MCF 10A (cell line): ENCODE measurements at regions of chr10 and their contacts with region 1.

Region 1: GRCh38 chr10:93006435-93007039 is 54.1 kb upstream of the CYP26C1 start:
- DNase-seq: peak; percentile 67
- H3K4me3 Mint-ChIP-seq: no peak overlapping the region
- H3K27ac Mint-ChIP-seq: no peak overlapping the region
- H3K4me1 Mint-ChIP-seq: peaks cover 7% of the 10 kb centered on the region
- H3K27me3 Mint-ChIP-seq: no peaks in the 10 kb centered on the region
- CTCF ChIP-seq: peak; percentile 68

Region 2: DNA sequence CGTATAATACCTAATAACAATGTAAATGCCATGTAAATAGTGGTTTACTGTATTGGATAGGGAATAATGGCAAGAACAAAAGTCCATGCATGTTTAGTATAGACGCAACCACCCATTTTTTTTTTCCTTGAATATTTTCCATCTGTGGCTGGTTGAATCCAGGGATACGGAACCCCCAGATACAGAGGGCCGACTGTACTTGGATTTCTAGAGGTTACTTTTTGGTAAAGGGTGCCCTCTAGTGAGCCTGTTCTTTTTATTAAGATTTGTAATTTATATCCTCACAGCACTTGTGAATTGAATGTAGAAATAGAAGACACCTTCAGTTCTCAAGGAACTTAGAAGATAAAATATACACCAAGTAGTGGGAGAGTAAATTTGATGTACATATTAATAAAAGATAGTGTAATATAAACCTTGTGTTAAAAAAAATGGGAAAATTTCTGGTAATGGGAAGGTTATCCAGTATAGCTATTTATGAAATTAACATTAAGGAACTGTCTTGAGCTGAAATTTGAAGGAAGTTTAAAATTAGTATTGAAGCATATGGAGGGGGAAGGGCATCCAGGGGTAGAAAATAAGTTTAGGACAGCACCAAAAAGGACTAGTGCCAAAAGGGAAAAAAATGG is 126.2 kb before region 1 on chr10:
- CTCF ChIA-PET with region 1: interaction called, 10 read pairs
- POLR2A ChIA-PET with region 1: no interaction called
- intact Hi-C with region 1: loop called (anchors 1 kb)
- DNase-seq: peak; percentile 59
- H3K4me3 Mint-ChIP-seq: no peak overlapping the region
- H3K27ac Mint-ChIP-seq: no peak overlapping the region
- H3K4me1 Mint-ChIP-seq: no peaks in the 10 kb centered on the region
- H3K27me3 Mint-ChIP-seq: no peaks in the 10 kb centered on the region
- CTCF ChIP-seq: peak; percentile 39

Region 3: GRCh38 chr10:92990615-92991014 is 15.9 kb before region 1 on chr10:
- CTCF ChIA-PET with region 1: interaction called, 10 read pairs
- POLR2A ChIA-PET with region 1: no interaction called
- intact Hi-C with region 1: no loop called
- DNase-seq: peak; percentile 4
- H3K4me3 Mint-ChIP-seq: no peak overlapping the region
- H3K27ac Mint-ChIP-seq: no peak overlapping the region
- H3K4me1 Mint-ChIP-seq: no peaks in the 10 kb centered on the region
- H3K27me3 Mint-ChIP-seq: no peaks in the 10 kb centered on the region
- CTCF ChIP-seq: no peak

Region 4: DNA sequence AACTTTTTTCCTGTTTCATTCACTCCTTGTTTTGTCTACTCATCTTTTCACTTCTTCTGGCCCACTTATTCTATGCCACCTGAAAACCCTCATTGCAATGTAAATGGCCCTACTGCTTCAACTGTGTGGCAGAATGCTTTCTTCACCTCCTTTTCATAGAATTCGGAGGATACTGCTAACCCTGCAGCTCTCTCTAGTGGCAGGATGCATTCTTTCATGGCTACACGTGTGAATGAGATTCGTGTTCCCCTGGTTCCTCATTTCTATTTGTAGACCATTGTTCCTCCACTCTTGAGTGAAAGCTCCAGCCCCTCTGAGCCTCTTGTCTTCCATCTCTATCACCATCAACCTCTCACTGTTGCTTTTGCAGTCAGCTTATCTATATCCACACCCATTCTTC is 33.2 kb after region 1 on chr10:
- CTCF ChIA-PET with region 1: interaction called, 56 read pairs
- POLR2A ChIA-PET with region 1: interaction called, 3 read pairs
- intact Hi-C with region 1: loop called (anchors 1 kb)
- DNase-seq: peak; percentile 54
- H3K4me3 Mint-ChIP-seq: no peak overlapping the region
- H3K27ac Mint-ChIP-seq: no peak overlapping the region
- H3K4me1 Mint-ChIP-seq: no peaks in the 10 kb centered on the region
- H3K27me3 Mint-ChIP-seq: no peaks in the 10 kb centered on the region
- CTCF ChIP-seq: peak; percentile 65

Region 5: GRCh38 chr10:93080350-93081046 is 74.0 kb after region 1 on chr10:
- CTCF ChIA-PET with region 1: interaction called, 37 read pairs
- POLR2A ChIA-PET with region 1: no interaction called
- intact Hi-C with region 1: no loop called
- DNase-seq: peak; percentile 57
- H3K4me3 Mint-ChIP-seq: peak overlapping the region; percentile 29
- H3K27ac Mint-ChIP-seq: peak overlapping the region; percentile 72
- H3K4me1 Mint-ChIP-seq: peaks cover 5% of the 10 kb centered on the region
- H3K27me3 Mint-ChIP-seq: peaks cover 17% of the 10 kb centered on the region
- CTCF ChIP-seq: peak; percentile 86

Region 6: GRCh38 chr10:93288654-93289634 is 282.4 kb after region 1 on chr10:
- CTCF ChIA-PET with region 1: interaction called, 3 read pairs
- POLR2A ChIA-PET with region 1: no interaction called
- intact Hi-C with region 1: loop called (anchors 1 kb)
- DNase-seq: peak; percentile 86
- H3K4me3 Mint-ChIP-seq: no peak overlapping the region
- H3K27ac Mint-ChIP-seq: peak overlapping the region; percentile 40
- H3K4me1 Mint-ChIP-seq: peaks cover 5% of the 10 kb centered on the region
- H3K27me3 Mint-ChIP-seq: no peaks in the 10 kb centered on the region
- CTCF ChIP-seq: peak; percentile 77

Region 7: GRCh38 chr10:93515071-93516005 is 508.8 kb after region 1 on chr10:
- CTCF ChIA-PET with region 1: interaction called, 3 read pairs
- POLR2A ChIA-PET with region 1: no interaction called
- intact Hi-C with region 1: loop called (anchors 10 kb)
- DNase-seq: no peak
- H3K4me3 Mint-ChIP-seq: no peak overlapping the region
- H3K27ac Mint-ChIP-seq: peak overlapping the region; percentile 1
- H3K4me1 Mint-ChIP-seq: peaks cover 7% of the 10 kb centered on the region
- H3K27me3 Mint-ChIP-seq: no peaks in the 10 kb centered on the region
- CTCF ChIP-seq: no peak